Heart right ventricle (tissue), 16 donors: ENCODE measurements at regions of chr10 and their contacts with region 1.

Region 1: GRCh38 chr10:27446091-27446918 is 57.8 kb upstream of the RAB18 start:
- DNase-seq: no peak
- ATAC-seq: peak in 2 of 8 donors; percentile 39 to 47
- H3K4me3 ChIP-seq: no peak overlapping the region
- H3K27ac ChIP-seq: no peak overlapping the region
- H3K4me1 ChIP-seq: peaks cover 0 to 27% (median 0%) of the 10 kb centered on the region in 9 donors
- H3K27me3 ChIP-seq: peaks cover 0 to 2% (median 0%) of the 10 kb centered on the region in 7 donors
- CTCF ChIP-seq: peak in 7 of 9 donors; percentile 30 to 65 (median 52)

Region 2: DNA sequence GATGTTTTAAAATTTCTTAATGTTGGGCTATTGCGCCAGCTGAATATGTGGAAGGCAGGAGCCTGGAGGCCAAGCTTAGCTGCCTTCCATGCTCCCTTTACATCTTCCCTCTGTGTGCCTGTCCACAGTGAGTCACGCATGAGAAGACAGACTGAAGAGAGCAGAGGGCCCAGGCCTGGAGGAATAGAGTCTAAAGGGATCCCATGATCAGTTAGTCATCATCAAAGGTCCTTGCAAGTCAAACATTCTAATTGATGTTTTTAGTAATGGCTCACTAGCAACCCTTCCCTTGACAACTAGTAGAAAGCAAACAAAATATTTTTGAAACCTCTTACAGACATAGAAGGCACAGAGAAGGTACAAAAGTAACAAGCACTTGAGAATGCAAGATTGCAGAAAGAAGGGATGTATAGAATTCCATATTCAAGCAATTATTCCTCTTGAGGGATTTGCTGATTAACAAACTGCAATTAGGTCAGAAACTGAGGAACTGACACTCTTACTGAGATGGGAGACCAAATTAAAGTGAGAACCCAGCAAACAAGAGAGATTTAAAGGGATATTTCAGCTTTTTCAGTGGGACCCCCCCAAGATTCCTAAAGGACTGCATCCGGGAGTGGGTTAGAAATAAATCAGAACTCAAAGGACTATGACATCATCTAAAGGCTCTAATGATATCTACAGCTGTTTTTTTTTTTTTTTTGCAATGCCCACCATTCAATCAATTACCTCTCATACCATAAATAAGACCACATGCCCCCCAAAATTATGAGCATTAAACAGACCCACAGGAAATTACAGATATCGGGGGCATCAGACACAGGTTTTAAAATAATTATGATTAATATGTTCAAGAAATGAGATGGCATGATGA is 1038.7 kb before region 1 on chr10:
- intact Hi-C with region 1: no loop called
- DNase-seq: no peak
- ATAC-seq: no peak
- H3K4me3 ChIP-seq: no peak overlapping the region
- H3K27ac ChIP-seq: no peak overlapping the region
- H3K4me1 ChIP-seq: no peaks in the 10 kb centered on the region
- H3K27me3 ChIP-seq: peaks cover 0 to 10% (median 0%) of the 10 kb centered on the region in 7 donors
- CTCF ChIP-seq: no peak

Region 3: DNA sequence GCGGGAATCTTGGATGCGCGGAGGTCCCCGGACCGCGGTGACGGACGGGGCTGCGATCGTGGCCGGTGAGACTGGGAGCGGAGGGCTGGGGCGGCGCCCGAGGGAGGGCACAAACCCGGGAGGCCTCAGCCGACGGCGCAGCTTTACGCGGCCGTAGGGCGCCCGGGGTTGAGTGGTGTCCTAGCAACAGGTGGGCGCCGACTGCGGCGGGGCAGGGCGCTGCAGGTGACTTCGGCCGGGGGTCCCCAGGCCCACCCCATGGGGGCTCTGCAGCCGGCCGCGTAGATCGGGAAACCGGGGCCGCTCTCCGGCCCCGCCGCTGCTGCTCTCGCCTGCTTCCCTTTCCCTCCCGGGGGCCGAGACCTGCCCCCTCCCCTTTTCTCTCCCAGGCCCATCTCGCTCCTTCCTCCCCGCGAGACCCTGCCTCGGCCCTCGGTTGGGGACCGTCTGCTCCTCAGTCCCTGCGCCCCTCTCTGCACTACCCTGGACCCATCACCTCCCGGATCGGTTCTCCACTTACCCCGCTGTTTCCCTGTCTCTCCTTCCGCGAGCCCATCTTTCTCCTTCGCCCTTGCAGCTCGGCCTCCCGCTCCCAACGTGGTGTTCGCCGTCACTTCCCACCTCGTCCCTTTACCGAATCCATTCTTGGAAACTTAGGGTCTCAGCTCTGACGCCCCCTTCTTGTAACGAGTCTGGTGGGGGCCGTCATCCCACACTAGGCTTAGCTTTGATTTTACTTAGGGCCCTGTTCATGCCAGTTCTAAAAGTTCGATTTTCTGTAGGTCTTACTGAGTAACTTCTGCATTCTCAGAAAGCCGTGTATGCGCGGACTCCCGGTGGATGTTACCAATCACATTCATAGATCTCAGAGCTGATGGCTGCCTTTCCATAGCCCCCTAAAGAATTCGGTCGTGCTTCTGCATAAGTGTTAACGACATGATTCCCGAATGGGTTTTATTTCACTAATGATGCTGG is 187.2 kb before region 1 on chr10:
- intact Hi-C with region 1: no loop called
- DNase-seq: no peak
- ATAC-seq: peak; percentile 51 to 91 (median 65)
- H3K4me3 ChIP-seq: peak overlapping the region; percentile 48 to 82 (median 62)
- H3K27ac ChIP-seq: peak overlapping the region in 8 of 10 donors; percentile 2 to 74 (median 36)
- H3K4me1 ChIP-seq: peaks cover 0 to 14% (median 9%) of the 10 kb centered on the region in 9 donors
- H3K27me3 ChIP-seq: peaks cover 0 to 53% (median 32%) of the 10 kb centered on the region in 7 donors
- CTCF ChIP-seq: no peak

Region 4: GRCh38 chr10:27661514-27662286 is 215.4 kb after region 1 on chr10:
- intact Hi-C with region 1: loop called in 8 of 10 experiments (anchors 2 to 5 kb)
- DNase-seq: no peak
- ATAC-seq: no peak
- H3K4me3 ChIP-seq: no peak overlapping the region
- H3K27ac ChIP-seq: no peak overlapping the region
- H3K4me1 ChIP-seq: peaks cover 0 to 27% (median 0%) of the 10 kb centered on the region in 9 donors
- H3K27me3 ChIP-seq: peaks cover 0 to 10% (median 0%) of the 10 kb centered on the region in 7 donors
- CTCF ChIP-seq: no peak

Region 5: GRCh38 chr10:28179006-28179742 is 732.9 kb after region 1 on chr10:
- intact Hi-C with region 1: loop called in 2 of 10 experiments (anchors 5 to 10 kb)
- DNase-seq: peak in 1 of 2 donors; percentile 21
- ATAC-seq: peak in 2 of 8 donors; percentile 56 to 61
- H3K4me3 ChIP-seq: no peak overlapping the region
- H3K27ac ChIP-seq: peak overlapping the region in 1 of 10 donors; percentile 2
- H3K4me1 ChIP-seq: peaks cover 0 to 21% (median 5%) of the 10 kb centered on the region in 9 donors
- H3K27me3 ChIP-seq: peaks cover 0 to 8% (median 0%) of the 10 kb centered on the region in 7 donors
- CTCF ChIP-seq: peak; percentile 58 to 83 (median 73)

Region 6: DNA sequence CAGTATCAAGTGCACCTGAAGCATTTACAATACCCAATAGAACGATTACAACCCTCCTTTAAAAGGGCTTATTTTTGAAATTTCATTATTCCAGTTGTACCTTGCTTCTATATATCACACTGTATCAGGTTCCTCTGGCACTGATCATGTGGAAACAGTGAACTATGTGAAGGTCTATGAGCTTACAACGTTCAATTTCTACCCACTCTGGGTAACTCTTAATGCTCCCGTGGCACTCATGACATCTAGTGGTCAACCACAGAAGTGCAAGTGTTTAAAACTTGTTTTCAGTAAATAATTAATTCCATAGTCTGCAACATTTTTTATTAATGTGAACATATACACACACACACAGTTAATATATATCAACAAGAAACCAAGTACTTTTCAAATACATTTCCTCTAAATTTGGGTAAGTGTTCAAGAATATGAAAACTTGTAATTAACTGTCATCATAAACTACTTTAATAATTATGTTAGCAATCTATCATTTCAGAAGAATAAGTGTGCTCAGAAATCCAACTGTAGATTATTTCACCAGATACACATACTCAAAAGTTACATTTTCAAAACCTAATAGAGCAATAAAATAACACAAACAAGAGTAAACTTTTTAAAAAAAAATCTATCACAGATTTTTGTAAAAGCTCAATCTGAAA is 795.6 kb after region 1 on chr10:
- intact Hi-C with region 1: loop called in 6 of 10 experiments (anchors 2 to 10 kb)
- DNase-seq: peak in 1 of 2 donors; percentile 28
- ATAC-seq: peak in 6 of 8 donors; percentile 56 to 81 (median 71)
- H3K4me3 ChIP-seq: no peak overlapping the region
- H3K27ac ChIP-seq: no peak overlapping the region
- H3K4me1 ChIP-seq: peaks cover 0 to 20% (median 0%) of the 10 kb centered on the region in 9 donors
- H3K27me3 ChIP-seq: no peaks in the 10 kb centered on the region
- CTCF ChIP-seq: peak; percentile 75 to 94 (median 91)

Region 7: DNA sequence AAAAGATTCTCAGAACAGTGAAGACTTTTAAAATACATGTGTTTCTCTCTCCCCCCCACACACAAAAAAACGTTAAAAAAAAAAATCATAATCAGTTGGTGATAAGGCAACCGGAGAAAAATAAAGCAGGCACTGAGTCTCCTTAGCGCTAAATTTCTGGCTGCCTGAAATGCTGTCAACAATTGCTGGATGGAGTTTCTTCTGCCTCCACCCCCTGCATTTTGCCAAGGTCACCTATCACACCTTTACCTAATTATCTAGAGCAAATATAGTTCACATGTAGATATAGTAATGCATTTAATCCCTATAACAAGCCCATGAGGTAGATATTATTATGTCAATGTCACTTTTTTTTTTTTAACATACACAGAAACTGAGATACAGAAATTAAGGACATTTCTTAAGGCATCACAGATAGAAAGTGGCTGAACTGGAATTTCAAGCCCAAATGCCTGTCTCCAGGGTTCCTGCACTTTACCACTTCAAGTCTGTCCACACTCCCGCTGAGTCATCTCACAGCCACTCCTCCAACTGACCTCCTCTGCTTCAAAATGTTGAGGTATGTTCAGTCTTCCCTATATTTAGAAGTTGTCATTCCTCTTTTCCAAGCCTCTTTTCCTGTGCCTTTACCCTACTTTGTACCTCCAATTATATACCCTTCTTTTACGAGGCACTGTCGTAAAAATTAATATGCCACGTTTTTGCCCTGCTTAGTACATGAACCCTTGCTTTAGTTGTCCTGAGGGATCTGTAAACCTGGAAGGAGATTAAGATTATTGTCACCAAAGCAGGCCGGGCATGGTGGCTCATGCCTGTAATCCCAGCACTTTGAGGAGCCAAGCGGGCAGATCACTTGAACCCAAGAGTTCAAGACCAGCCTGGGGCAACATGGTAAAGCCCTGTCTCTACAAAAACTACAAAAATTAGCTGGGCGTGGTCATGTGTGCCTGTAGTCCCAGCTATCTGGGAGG is 929.4 kb after region 1 on chr10:
- intact Hi-C with region 1: loop called in 2 of 10 experiments (anchors 10 kb)
- DNase-seq: no peak
- ATAC-seq: peak in 3 of 8 donors; percentile 47 to 87 (median 75)
- H3K4me3 ChIP-seq: no peak overlapping the region
- H3K27ac ChIP-seq: peak overlapping the region in 1 of 10 donors; percentile 16
- H3K4me1 ChIP-seq: peaks cover 0 to 28% (median 0%) of the 10 kb centered on the region in 9 donors
- H3K27me3 ChIP-seq: no peaks in the 10 kb centered on the region
- CTCF ChIP-seq: no peak

Region 8: GRCh38 chr10:28381903-28382347 is 935.6 kb after region 1 on chr10:
- intact Hi-C with region 1: loop called in 2 of 10 experiments (anchors 10 kb)
- DNase-seq: peak; percentile 47 to 79
- ATAC-seq: peak; percentile 77 to 93 (median 86)
- H3K4me3 ChIP-seq: no peak overlapping the region
- H3K27ac ChIP-seq: no peak overlapping the region
- H3K4me1 ChIP-seq: peaks cover 0 to 22% (median 0%) of the 10 kb centered on the region in 9 donors
- H3K27me3 ChIP-seq: peaks cover 0 to 8% (median 3%) of the 10 kb centered on the region in 7 donors
- CTCF ChIP-seq: peak; percentile 77 to 95 (median 92)

Region 9: GRCh38 chr10:28393966-28394568 is 947.8 kb after region 1 on chr10:
- intact Hi-C with region 1: loop called in 2 of 10 experiments (anchors 5 to 10 kb)
- DNase-seq: peak; percentile 30 to 45
- ATAC-seq: peak; percentile 61 to 90 (median 79)
- H3K4me3 ChIP-seq: no peak overlapping the region
- H3K27ac ChIP-seq: no peak overlapping the region
- H3K4me1 ChIP-seq: peaks cover 0 to 7% (median 0%) of the 10 kb centered on the region in 9 donors
- H3K27me3 ChIP-seq: peaks cover 0 to 3% (median 0%) of the 10 kb centered on the region in 7 donors
- CTCF ChIP-seq: peak; percentile 72 to 95 (median 91)